ENCODE measurements at regions of chrX and their contacts with region 1.

Region 1: GRCh38 chrX:46984705-46985104 is 72.5 kb downstream of the JADE3 start:
- DNase-seq: no peak
- ATAC-seq: no peak
- H3K4me3 ChIP-seq: no peak overlapping the region
- H3K4me3 Mint-ChIP-seq: no peak overlapping the region
- H3K27ac ChIP-seq: no peak overlapping the region
- H3K27ac Mint-ChIP-seq: no peak overlapping the region
- H3K4me1 ChIP-seq: no peaks in the 10 kb centered on the region
- H3K4me1 Mint-ChIP-seq: no peaks in the 10 kb centered on the region
- H3K27me3 ChIP-seq: no peaks in the 10 kb centered on the region
- H3K27me3 Mint-ChIP-seq: peaks cover 7 to 16% of the 10 kb centered on the region in 2 donors
- CTCF ChIP-seq: no peak

Region 2: GRCh38 chrX:46860557-46860956 is 124.1 kb before region 1 on chrX:
- intact Hi-C with region 1: no loop called
- DNase-seq: no peak
- ATAC-seq: no peak
- H3K4me3 ChIP-seq: no peak overlapping the region
- H3K4me3 Mint-ChIP-seq: no peak overlapping the region
- H3K27ac ChIP-seq: no peak overlapping the region
- H3K27ac Mint-ChIP-seq: no peak overlapping the region
- H3K4me1 ChIP-seq: no peaks in the 10 kb centered on the region
- H3K4me1 Mint-ChIP-seq: no peaks in the 10 kb centered on the region
- H3K27me3 ChIP-seq: no peaks in the 10 kb centered on the region
- H3K27me3 Mint-ChIP-seq: no peaks in the 10 kb centered on the region
- CTCF ChIP-seq: no peak

Region 3: GRCh38 chrX:46912098-46912602 is 72.6 kb before region 1 on chrX and contains the start of gene JADE3:
- intact Hi-C with region 1: loop called (anchors 10 kb)
- DNase-seq: peak; percentile 15 to 48
- ATAC-seq: peak; percentile 51 to 55 (median 53)
- H3K4me3 ChIP-seq: peak within 1 kb of the TSS; percentile 43
- H3K4me3 Mint-ChIP-seq: peak within 1 kb of the TSS; percentile 79
- H3K27ac ChIP-seq: no peak within 1 kb of the TSS
- H3K27ac Mint-ChIP-seq: no peak within 1 kb of the TSS
- H3K4me1 ChIP-seq: peaks cover 9% of the 10 kb centered on the region
- H3K4me1 Mint-ChIP-seq: peaks cover 7% of the 10 kb centered on the region in 2 donors
- H3K27me3 ChIP-seq: peaks cover 8% of the 10 kb centered on the region
- H3K27me3 Mint-ChIP-seq: peaks cover 21 to 37% of the 10 kb centered on the region in 2 donors
- CTCF ChIP-seq: no peak
- total RNA-seq, gene JADE3: 0.16 to 0.54 (median 0.43) TPM